ENCODE measurements at regions of chr5 and their contacts with region 1.

Region 1: GRCh38 chr5:155530046-155530445 is 516.5 kb downstream of the KIF4B start:
- DNase-seq: no peak
- ATAC-seq: no peak
- H3K4me3 ChIP-seq: no peak overlapping the region
- H3K4me3 Mint-ChIP-seq: no peak overlapping the region
- H3K27ac ChIP-seq: no peak overlapping the region
- H3K27ac Mint-ChIP-seq: no peak overlapping the region
- H3K4me1 ChIP-seq: no peaks in the 10 kb centered on the region
- H3K4me1 Mint-ChIP-seq: no peaks in the 10 kb centered on the region
- H3K27me3 ChIP-seq: no peaks in the 10 kb centered on the region
- H3K27me3 Mint-ChIP-seq: no peaks in the 10 kb centered on the region
- CTCF ChIP-seq: no peak

Region 2: DNA sequence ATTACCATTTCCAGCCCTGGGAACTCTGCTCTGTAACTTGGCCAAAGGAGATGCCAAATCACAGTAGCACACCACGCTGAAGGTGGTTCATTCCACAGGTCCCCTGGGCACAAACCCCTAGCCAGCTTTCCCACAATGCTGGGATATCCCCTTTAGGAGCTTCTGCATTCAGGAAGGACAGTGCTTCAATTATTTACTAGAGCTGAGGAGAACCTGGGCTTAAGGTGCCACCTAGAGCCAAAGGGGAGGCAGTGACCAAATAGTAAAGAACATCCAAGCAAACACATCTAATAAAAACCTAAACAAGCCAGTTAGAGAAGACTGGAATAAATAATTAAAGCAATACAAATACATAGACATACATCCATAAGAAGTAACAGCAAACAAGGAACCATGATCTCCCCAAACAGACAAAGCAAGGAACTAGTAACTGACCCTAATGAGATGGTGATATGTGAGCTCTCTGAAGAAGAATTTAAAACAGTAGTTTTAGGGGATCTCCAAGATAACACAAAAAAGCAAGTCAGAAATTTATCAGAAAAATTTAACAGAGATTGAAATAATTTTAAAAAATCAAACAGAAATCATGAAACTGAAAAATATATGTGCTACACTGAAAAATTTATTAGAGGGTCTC is 501.9 kb before region 1 on chr5:
- CTCF ChIA-PET with region 1: no interaction called
- POLR2A ChIA-PET with region 1: no interaction called
- intact Hi-C with region 1: no loop called
- DNase-seq: no peak
- ATAC-seq: no peak
- H3K4me3 ChIP-seq: no peak overlapping the region
- H3K4me3 Mint-ChIP-seq: no peak overlapping the region
- H3K27ac ChIP-seq: no peak overlapping the region
- H3K27ac Mint-ChIP-seq: no peak overlapping the region
- H3K4me1 ChIP-seq: no peaks in the 10 kb centered on the region
- H3K4me1 Mint-ChIP-seq: no peaks in the 10 kb centered on the region
- H3K27me3 ChIP-seq: peaks cover 5% of the 10 kb centered on the region in 2 experiments
- H3K27me3 Mint-ChIP-seq: peaks cover 23% of the 10 kb centered on the region
- CTCF ChIP-seq: no peak

Region 3: GRCh38 chr5:155546075-155546474 is 16.0 kb after region 1 on chr5:
- CTCF ChIA-PET with region 1: no interaction called
- POLR2A ChIA-PET with region 1: no interaction called
- intact Hi-C with region 1: loop called (anchors 1 to 2 kb)
- DNase-seq: no peak
- ATAC-seq: no peak
- H3K4me3 ChIP-seq: no peak overlapping the region
- H3K4me3 Mint-ChIP-seq: no peak overlapping the region
- H3K27ac ChIP-seq: no peak overlapping the region
- H3K27ac Mint-ChIP-seq: no peak overlapping the region
- H3K4me1 ChIP-seq: no peaks in the 10 kb centered on the region
- H3K4me1 Mint-ChIP-seq: no peaks in the 10 kb centered on the region
- H3K27me3 ChIP-seq: no peaks in the 10 kb centered on the region
- H3K27me3 Mint-ChIP-seq: no peaks in the 10 kb centered on the region
- CTCF ChIP-seq: no peak